Posterior vena cava (tissue), 2 donors: ENCODE measurements at regions of chr2 and their contacts with region 1.

Region 1: GRCh38 chr2:152717228-152718075 is at the start of gene PRPF40A:
- DNase-seq: peak; percentile 100
- total RNA-seq, gene PRPF40A: 62.2 to 69.2 TPM

Region 2: DNA sequence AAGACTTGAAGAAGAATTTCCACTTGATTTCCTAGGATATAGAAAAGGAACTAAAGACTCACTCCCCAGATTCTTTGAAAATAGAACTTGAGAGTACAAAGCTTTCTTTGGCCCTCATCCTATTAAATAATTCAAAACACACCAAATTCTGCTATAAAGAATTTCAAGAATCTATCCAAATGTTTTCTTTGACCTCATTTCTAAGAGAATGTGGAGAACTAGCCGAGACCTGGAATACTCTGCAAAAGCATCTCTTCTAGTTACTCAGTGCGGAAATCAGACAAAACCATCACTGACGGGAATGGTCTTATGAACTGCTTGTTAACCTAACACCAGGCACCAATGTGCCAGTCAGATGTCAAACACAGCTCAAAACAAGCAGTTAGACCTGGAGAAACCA is 845.0 kb before region 1 on chr2:
- intact Hi-C with region 1: loop called in 1 of 2 experiments (anchors 5 kb)
- DNase-seq: no peak